CD8-positive, alpha-beta T cell (primary cell): ENCODE measurements at regions of chr3 and their contacts with region 1.

Region 1: DNA sequence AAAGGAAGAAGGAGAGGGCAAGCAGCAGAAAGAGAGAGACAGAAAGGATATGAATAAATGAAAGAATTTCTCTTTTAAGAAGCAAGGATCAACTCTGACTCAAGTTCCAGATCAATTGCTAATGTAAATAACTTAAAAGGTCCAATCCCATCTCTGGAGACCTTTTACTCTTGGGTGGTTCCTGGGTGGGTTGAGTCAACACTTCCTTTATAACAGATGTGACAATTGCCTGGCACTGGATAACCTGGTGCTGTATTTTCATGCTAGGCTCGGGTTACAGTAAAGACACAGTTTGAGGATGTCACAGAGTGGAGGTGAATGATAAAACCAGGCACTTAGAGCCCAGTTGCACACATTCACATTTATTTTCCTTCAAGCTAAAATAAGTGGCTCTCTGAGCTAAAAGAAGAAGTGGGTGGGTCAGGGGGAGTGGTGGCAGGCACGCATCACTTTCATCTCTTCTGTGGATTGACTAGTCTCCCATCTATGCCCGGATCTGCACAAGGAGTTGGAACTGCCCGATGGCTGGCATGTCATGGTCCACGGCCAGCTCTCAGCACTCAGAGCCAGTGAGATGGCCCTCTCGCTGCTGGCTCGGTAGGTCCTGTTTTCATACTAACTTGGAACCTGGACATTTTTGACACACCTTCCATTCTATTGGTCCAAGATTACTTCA is 465.8 kb downstream of the FOXP1 start:
- DNase-seq: no peak
- ATAC-seq: peak; percentile 36
- H3K4me3 ChIP-seq: no peak overlapping the region
- H3K4me3 Mint-ChIP-seq: no peak overlapping the region
- H3K27ac ChIP-seq: no peak overlapping the region
- H3K27ac Mint-ChIP-seq: peak overlapping the region; percentile 86
- H3K4me1 ChIP-seq: peaks cover 56% of the 10 kb centered on the region
- H3K4me1 Mint-ChIP-seq: peaks cover 86% of the 10 kb centered on the region
- H3K27me3 ChIP-seq: no peaks in the 10 kb centered on the region
- H3K27me3 Mint-ChIP-seq: no peaks in the 10 kb centered on the region
- CTCF ChIP-seq: no peak

Region 2: GRCh38 chr3:71101014-71101413 is 16.7 kb before region 1 on chr3:
- CTCF ChIA-PET with region 1: interaction called, 3 read pairs
- POLR2A ChIA-PET with region 1: interaction called, 3 read pairs
- intact Hi-C with region 1: loop called in 1 of 2 experiments (anchors 2 kb)
- DNase-seq: no peak
- ATAC-seq: no peak
- H3K4me3 ChIP-seq: no peak overlapping the region
- H3K4me3 Mint-ChIP-seq: peak overlapping the region; percentile 38
- H3K27ac ChIP-seq: no peak overlapping the region
- H3K27ac Mint-ChIP-seq: peak overlapping the region; percentile 90
- H3K4me1 ChIP-seq: peaks cover 66% of the 10 kb centered on the region
- H3K4me1 Mint-ChIP-seq: peaks cover 95% of the 10 kb centered on the region
- H3K27me3 ChIP-seq: no peaks in the 10 kb centered on the region
- H3K27me3 Mint-ChIP-seq: no peaks in the 10 kb centered on the region
- CTCF ChIP-seq: no peak